Activated T-helper 2 cell treated with anti-CD3 and anti-CD28 coated beads, Interferon-gamma antibody, Interleukin-2, Interleukin-4, amounts not matched to agents 10 μg/mL and 5 μg/mL and 100 μg/mL, durations not matched to agents 14 hours and 24 hours and 36 hours (primary cell): ENCODE measurements at regions of chr1 and their contacts with region 1.

Region 1: DNA sequence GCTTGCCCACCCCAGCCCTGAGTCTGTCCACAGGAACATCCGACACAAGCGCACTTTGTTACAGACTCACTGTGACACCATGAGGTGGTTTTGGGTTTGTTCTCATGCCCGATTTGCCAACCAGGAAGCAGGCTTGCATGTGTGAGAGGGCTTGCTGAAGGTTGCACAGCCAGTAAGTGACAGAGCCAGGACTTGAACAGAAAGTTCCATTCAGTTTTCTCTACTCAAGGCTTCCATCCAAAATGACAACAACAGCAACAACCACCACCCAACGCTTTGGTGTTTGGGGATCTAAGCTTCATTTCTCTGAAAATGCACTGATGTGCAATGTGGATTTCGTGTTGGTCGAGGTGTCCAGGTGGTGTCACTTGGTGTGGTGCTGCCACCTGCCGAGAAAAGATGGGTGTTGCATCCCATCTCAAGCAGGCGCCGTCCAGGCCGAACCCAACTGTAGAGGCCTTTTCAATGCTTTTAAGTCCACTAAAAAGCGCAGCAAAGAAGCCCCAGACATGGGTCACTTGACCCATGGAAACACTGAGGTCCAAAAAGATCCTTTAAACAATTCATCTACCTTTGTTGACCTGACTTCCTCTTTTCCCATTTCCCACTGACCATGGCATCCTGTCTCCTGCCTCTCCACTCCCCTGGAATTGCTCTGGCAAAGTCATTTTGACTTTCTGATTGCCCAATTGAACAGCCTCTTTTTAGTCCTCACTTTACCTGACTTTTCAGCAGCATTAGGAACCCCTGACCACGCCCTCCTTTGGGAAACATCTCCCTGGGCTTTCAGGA is 12.2 kb downstream of the CITED4 start:
- DNase-seq: peak; percentile 73
- H3K4me3 Mint-ChIP-seq: no peak overlapping the region
- H3K27ac Mint-ChIP-seq: peak overlapping the region; percentile 42
- H3K4me1 Mint-ChIP-seq: peaks cover 19% of the 10 kb centered on the region
- H3K27me3 Mint-ChIP-seq: peaks cover 4% of the 10 kb centered on the region

Region 2: GRCh38 chr1:40774266-40774998 is 75.6 kb before region 1 on chr1:
- intact Hi-C with region 1: loop called (anchors 1 kb)
- DNase-seq: peak; percentile 41
- H3K4me3 Mint-ChIP-seq: no peak overlapping the region
- H3K27ac Mint-ChIP-seq: peak overlapping the region; percentile 46
- H3K4me1 Mint-ChIP-seq: peaks cover 5% of the 10 kb centered on the region
- H3K27me3 Mint-ChIP-seq: no peaks in the 10 kb centered on the region